Activated naive CD4-positive, alpha-beta T cell treated with anti-CD3 and anti-CD28 coated beads for 36 hours (primary cell): ENCODE measurements at regions of chr4 and their contacts with region 1.

Region 1: DNA sequence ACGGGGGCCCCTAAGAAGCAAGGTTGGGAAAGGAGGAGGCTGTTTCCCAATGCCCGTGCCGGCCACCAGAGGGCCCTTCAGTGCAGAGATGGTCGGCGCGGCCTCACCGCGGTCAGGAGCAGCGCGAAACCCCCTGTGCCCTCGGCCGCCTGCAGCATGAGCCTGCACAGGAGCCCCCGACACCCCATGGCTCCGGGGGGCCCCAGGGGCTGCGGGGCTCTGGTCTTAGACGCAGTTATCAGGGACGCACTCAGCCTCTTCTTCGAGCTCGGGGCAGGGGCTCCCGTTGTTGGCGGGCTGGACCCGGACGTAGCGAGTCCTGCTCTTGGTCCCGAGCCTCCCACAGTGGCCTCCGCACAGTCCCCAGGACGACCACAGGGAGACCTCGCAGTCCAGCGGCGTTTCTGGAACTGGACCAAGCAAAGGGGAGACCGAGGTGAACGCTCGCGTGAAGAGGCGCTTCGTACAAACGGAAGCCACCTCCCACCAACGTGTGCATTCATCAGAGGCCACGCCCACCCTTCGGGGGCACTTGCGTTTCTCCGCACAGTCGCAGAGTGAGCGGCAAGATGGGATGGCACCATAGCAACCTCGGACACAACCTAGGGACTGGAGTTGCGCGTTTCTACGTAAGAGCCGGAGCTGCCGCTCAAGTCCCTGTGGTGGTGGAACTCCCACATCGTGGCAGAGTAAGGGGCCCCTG is 5.0 kb downstream of the SPON2 start:
- DNase-seq: peak; percentile 93
- H3K4me3 Mint-ChIP-seq: peak overlapping the region; percentile 74
- H3K27ac Mint-ChIP-seq: no peak overlapping the region
- H3K4me1 Mint-ChIP-seq: peaks cover 18% of the 10 kb centered on the region
- H3K27me3 Mint-ChIP-seq: peaks cover 15% of the 10 kb centered on the region

Region 2: DNA sequence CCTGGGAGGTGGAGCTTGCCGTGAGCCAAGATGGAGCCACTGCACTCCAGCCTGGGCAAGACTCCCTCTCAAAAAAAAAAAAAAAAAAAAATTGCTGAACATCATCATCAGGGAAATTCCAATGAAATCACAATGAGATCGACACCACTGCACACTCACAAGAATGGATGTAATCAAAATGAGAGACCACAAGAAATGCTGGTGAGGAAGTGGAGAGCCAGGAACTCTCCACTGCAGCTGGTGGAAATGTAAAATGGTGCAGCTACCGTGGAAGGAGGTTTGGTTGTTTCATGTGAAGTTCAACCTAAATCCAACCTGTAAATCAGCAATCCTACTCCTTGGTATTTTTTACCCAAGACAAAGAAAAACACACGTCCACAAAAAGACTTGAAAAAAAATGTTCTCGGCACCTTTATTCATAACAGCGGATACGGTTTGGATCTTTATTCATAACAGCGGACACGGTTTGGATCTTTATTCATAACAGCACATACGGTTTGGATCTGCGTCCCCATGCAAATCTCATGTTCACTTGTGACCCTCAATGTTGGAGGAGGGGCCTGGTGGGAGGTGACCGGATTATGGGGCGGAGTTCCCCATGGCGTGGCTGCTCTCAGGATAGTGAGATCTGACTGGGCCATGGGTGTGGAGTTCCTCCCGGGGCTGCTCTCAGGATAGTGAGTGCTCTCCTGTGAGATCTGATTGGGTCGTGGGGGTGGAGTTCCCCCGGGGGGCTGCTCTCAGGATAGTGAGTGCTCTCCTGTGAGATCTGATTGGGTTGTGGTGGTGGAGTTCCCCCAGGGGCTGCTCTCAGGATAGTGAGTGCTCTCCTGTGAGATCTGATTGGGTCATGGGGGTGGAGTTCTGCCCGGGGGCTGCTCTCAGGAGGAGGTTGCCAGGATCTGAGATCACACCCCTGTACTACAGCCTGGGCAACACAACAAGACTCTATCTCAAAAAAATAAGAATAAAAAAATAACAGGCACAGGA is 243.0 kb before region 1 on chr4:
- CTCF ChIA-PET with region 1: no interaction called
- intact Hi-C with region 1: no loop called
- DNase-seq: peak; percentile 65
- H3K4me3 Mint-ChIP-seq: peak overlapping the region; percentile 7
- H3K27ac Mint-ChIP-seq: peak overlapping the region; percentile 90
- H3K4me1 Mint-ChIP-seq: peaks cover 69% of the 10 kb centered on the region
- H3K27me3 Mint-ChIP-seq: no peaks in the 10 kb centered on the region

Region 3: DNA sequence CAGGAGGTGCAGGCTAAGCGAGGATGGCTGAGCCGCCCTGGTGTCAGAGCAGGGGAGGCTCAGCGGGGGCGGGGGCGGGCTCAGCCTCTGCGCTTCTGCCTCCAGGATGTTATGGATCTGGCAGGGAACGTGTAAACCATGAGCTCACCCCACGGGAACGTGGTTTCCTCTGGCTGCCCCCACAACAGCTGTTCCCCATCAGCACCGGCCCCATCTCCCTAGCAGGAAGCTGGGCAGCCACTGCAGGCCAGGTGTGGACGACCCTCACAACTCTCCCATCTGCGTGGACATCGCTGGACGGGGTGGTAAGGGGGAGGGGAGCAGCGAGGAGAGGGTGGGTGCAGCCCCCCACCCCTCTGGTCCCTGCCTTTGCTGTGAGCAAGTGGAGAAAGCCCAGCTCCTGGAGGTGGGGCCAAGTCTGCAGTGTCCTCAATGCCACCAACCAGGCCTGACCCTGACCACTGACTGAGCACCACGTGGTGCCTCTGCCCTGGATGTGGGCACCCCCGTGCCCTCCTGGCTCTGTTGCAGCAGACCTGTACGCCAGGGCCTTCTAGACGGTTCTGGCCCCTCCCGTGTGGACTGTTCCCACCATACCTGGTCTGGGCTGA is 33.1 kb after region 1 on chr4:
- CTCF ChIA-PET with region 1: interaction called, 4 read pairs
- intact Hi-C with region 1: loop called (anchors 1 kb)
- DNase-seq: no peak
- H3K4me3 Mint-ChIP-seq: peak overlapping the region; percentile 60
- H3K27ac Mint-ChIP-seq: no peak overlapping the region
- H3K4me1 Mint-ChIP-seq: peaks cover 19% of the 10 kb centered on the region
- H3K27me3 Mint-ChIP-seq: no peaks in the 10 kb centered on the region

Region 4: GRCh38 chr4:1219566-1219950 is 52.2 kb after region 1 on chr4:
- CTCF ChIA-PET with region 1: interaction called, 10 read pairs
- intact Hi-C with region 1: no loop called
- DNase-seq: no peak
- H3K4me3 Mint-ChIP-seq: no peak overlapping the region
- H3K27ac Mint-ChIP-seq: no peak overlapping the region
- H3K4me1 Mint-ChIP-seq: peaks cover 21% of the 10 kb centered on the region
- H3K27me3 Mint-ChIP-seq: no peaks in the 10 kb centered on the region